ENCODE measurements at regions of chr3 and their contacts with region 1.

Region 1: GRCh38 chr3:66998113-66998903 is at the start of gene KBTBD8:
- DNase-seq: peak; percentile 44 to 99 (median 97)
- ATAC-seq: peak; percentile 94 to 95
- H3K4me3 Mint-ChIP-seq: peak within 1 kb of the TSS; percentile 93 to 99 (median 96)
- H3K27ac Mint-ChIP-seq: peak within 1 kb of the TSS; percentile 73 to 97 (median 94)
- H3K4me1 Mint-ChIP-seq: peaks cover 6 to 44% (median 30%) of the 10 kb centered on the region in 4 donors
- H3K27me3 Mint-ChIP-seq: peaks cover 0 to 24% (median 5%) of the 10 kb centered on the region in 5 donors
- polyA plus RNA-seq, gene KBTBD8: 0.35 to 1.7 (median 0.71) TPM

Region 2: DNA sequence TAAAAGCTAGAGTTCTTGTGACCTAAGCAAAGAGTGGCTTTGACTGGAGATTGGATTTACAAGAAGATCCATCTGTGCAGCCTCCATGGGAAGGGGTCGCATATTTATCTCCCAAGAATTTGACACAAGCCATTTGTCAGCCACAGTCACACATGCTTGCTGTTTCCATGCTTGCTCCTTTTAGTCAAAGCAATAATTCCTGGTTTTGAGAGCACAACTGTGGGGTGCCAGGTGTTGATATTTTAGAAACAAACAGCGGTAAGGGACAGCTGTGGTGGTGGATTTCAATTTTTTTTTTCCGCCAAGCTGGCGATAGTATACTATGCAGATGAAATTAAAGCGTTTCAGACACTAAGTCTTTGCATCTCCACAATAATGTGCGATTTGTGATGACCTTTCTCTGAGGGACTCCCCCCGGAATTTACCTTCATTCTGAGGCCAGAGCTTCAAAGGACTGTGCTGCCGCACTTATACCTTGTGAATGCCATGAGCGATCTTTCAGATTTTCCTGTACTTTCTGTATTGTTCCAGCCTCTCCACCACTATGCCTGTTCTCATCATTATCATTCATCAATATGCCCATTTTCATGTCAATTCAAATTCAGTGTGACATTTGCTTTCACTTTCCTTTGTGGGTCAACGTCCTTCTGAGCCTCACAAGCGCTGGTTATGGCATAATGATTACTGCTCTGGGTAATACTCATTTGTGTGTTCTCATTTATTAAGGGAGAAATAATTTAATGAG is 108.4 kb before region 1 on chr3:
- POLR2A ChIA-PET with region 1: no interaction called
- DNase-seq: no peak
- ATAC-seq: no peak
- H3K4me3 Mint-ChIP-seq: no peak overlapping the region
- H3K27ac Mint-ChIP-seq: no peak overlapping the region
- H3K4me1 Mint-ChIP-seq: no peaks in the 10 kb centered on the region
- H3K27me3 Mint-ChIP-seq: peaks cover 0 to 10% (median 7%) of the 10 kb centered on the region in 5 donors

Region 3: GRCh38 chr3:66957367-66957766 is 40.9 kb before region 1 on chr3:
- POLR2A ChIA-PET with region 1: no interaction called
- DNase-seq: no peak
- ATAC-seq: no peak
- H3K4me3 Mint-ChIP-seq: no peak overlapping the region
- H3K27ac Mint-ChIP-seq: no peak overlapping the region
- H3K4me1 Mint-ChIP-seq: peaks cover 0 to 5% (median 1%) of the 10 kb centered on the region in 4 donors
- H3K27me3 Mint-ChIP-seq: peaks cover 3 to 26% (median 12%) of the 10 kb centered on the region in 5 donors

Region 4: GRCh38 chr3:66971891-66972551 is 26.3 kb before region 1 on chr3:
- POLR2A ChIA-PET with region 1: interaction called, 13 read pairs
- DNase-seq: peak; percentile 19 to 73 (median 48)
- ATAC-seq: peak; percentile 92
- H3K4me3 Mint-ChIP-seq: peak overlapping the region; percentile 81 to 92 (median 89)
- H3K27ac Mint-ChIP-seq: peak overlapping the region; percentile 20 to 87 (median 79)
- H3K4me1 Mint-ChIP-seq: peaks cover 8 to 20% (median 12%) of the 10 kb centered on the region in 4 donors
- H3K27me3 Mint-ChIP-seq: peaks cover 0 to 3% (median 0%) of the 10 kb centered on the region in 5 donors

Region 5: GRCh38 chr3:67008388-67008787 is 10.1 kb after region 1 on chr3:
- POLR2A ChIA-PET with region 1: no interaction called
- DNase-seq: no peak
- ATAC-seq: no peak
- H3K4me3 Mint-ChIP-seq: no peak overlapping the region
- H3K27ac Mint-ChIP-seq: no peak overlapping the region
- H3K4me1 Mint-ChIP-seq: peaks cover 20 to 41% (median 25%) of the 10 kb centered on the region in 4 donors
- H3K27me3 Mint-ChIP-seq: no peaks in the 10 kb centered on the region

Region 6: GRCh38 chr3:67090474-67090873 is 92.2 kb after region 1 on chr3:
- POLR2A ChIA-PET with region 1: no interaction called
- DNase-seq: no peak
- ATAC-seq: no peak
- H3K4me3 Mint-ChIP-seq: no peak overlapping the region
- H3K27ac Mint-ChIP-seq: no peak overlapping the region
- H3K4me1 Mint-ChIP-seq: peaks cover 0 to 2% (median 0%) of the 10 kb centered on the region in 4 donors
- H3K27me3 Mint-ChIP-seq: peaks cover 0 to 3% (median 2%) of the 10 kb centered on the region in 5 donors